B cell (primary cell): ENCODE measurements at regions of chr20 and their contacts with region 1.

Region 1: GRCh38 chr20:10434832-10435812 is at the start of gene SLX4IP:
- DNase-seq: peak; percentile 94
- ATAC-seq: peak; percentile 67
- H3K4me3 ChIP-seq: peak within 1 kb of the TSS; percentile 72 to 93 (median 73)
- H3K4me3 Mint-ChIP-seq: peak within 1 kb of the TSS; percentile 94
- H3K27ac ChIP-seq: peak within 1 kb of the TSS; percentile 81 to 95
- H3K27ac Mint-ChIP-seq: peak within 1 kb of the TSS; percentile 97
- H3K4me1 ChIP-seq: peaks cover 11 to 12% of the 10 kb centered on the region in 2 donors
- H3K4me1 Mint-ChIP-seq: peaks cover 39% of the 10 kb centered on the region
- H3K27me3 ChIP-seq: no peaks in the 10 kb centered on the region
- H3K27me3 Mint-ChIP-seq: no peaks in the 10 kb centered on the region
- CTCF ChIP-seq: no peak
- total RNA-seq, gene SLX4IP: 8.1 and 9.6 TPM in 2 replicates

Region 2: DNA sequence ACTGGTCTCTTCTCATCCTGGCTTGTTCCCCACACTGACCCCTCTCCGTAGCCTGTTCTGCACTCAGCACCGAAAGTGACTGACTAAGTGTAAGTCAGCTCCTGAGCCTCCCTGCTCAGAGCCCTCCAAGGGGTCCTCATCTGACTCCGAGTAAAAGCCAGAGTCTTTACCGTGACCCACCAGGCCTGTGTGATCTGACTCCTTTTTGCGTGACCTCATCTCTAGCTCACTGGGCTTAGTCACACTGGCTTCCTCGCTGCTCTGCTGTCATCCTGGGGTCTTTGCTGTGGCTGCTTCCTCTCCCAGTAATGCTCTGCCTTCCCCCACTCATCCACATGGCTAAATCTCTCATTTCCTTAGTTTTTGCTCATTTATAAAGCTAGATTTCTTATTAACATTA is 1249.6 kb before region 1 on chr20:
- CTCF ChIA-PET with region 1: no interaction called
- POLR2A ChIA-PET with region 1: no interaction called
- intact Hi-C with region 1: no loop called
- DNase-seq: no peak
- ATAC-seq: no peak
- H3K4me3 ChIP-seq: no peak overlapping the region
- H3K4me3 Mint-ChIP-seq: no peak overlapping the region
- H3K27ac ChIP-seq: no peak overlapping the region
- H3K27ac Mint-ChIP-seq: no peak overlapping the region
- H3K4me1 ChIP-seq: no peaks in the 10 kb centered on the region
- H3K4me1 Mint-ChIP-seq: no peaks in the 10 kb centered on the region
- H3K27me3 ChIP-seq: no peaks in the 10 kb centered on the region
- H3K27me3 Mint-ChIP-seq: no peaks in the 10 kb centered on the region
- CTCF ChIP-seq: no peak

Region 3: DNA sequence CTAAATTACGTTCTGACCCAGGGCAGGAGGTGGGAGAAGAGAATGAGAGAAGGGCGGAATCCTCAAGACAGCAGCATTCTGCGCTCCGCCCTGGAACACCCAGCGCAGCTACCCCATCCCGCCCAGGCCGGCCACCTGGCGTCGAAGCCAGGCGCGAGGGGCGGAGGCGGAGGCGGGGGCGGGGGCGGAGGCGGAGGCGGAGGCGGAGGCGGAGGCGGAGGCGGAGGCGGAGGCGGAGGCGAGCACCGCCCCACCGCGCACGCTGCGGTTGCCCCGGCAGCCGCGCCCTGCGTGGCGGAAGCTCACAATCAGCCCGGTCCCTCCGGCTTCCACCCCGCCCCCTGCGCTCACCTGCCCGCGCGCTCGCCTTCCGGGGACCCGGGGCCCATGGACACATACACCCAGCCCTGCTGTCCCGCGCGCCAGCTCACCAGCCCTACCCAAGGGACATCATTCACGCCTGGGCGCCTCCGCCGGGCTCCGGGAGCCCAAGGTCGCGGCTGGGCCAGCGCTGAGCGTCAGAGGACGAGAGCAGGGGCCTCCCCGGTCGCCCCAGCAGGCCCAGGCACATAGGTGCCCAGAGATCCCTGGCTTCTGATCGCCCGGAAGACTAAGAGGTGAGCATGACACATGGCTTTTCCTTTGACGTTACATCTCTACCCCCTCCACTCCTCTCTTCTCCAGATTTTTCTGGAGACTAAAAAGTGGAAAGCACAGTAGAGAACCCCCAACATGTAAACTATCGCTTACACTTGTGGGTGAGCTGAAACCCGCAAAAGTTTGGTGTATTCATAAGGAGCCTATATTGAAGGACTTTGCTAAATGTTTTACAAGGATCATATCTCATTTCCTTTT is 400.2 kb before region 1 on chr20 and contains the start of gene ANKEF1:
- CTCF ChIA-PET with region 1: no interaction called
- POLR2A ChIA-PET with region 1: no interaction called
- intact Hi-C with region 1: loop called (anchors 2 kb)
- DNase-seq: peak; percentile 87
- ATAC-seq: peak; percentile 96
- H3K4me3 ChIP-seq: peak within 1 kb of the TSS in 4 of 5 experiments; percentile 58 to 69 (median 62)
- H3K4me3 Mint-ChIP-seq: peak within 1 kb of the TSS; percentile 77
- H3K27ac ChIP-seq: peak within 1 kb of the TSS in 1 of 2 donors; percentile 47
- H3K27ac Mint-ChIP-seq: peak within 1 kb of the TSS; percentile 60
- H3K4me1 ChIP-seq: peaks cover 12 to 16% of the 10 kb centered on the region in 2 donors
- H3K4me1 Mint-ChIP-seq: peaks cover 13% of the 10 kb centered on the region
- H3K27me3 ChIP-seq: no peaks in the 10 kb centered on the region
- H3K27me3 Mint-ChIP-seq: peaks cover 7% of the 10 kb centered on the region
- CTCF ChIP-seq: no peak
- total RNA-seq, gene ANKEF1: 2.7 and 3.0 TPM in 2 replicates

Region 4: GRCh38 chr20:10352934-10353866 is 81.9 kb before region 1 on chr20:
- CTCF ChIA-PET with region 1: no interaction called
- POLR2A ChIA-PET with region 1: no interaction called
- intact Hi-C with region 1: no loop called
- DNase-seq: no peak
- ATAC-seq: no peak
- H3K4me3 ChIP-seq: no peak overlapping the region
- H3K4me3 Mint-ChIP-seq: no peak overlapping the region
- H3K27ac ChIP-seq: no peak overlapping the region
- H3K27ac Mint-ChIP-seq: no peak overlapping the region
- H3K4me1 ChIP-seq: no peaks in the 10 kb centered on the region
- H3K4me1 Mint-ChIP-seq: no peaks in the 10 kb centered on the region
- H3K27me3 ChIP-seq: no peaks in the 10 kb centered on the region
- H3K27me3 Mint-ChIP-seq: peaks cover 7% of the 10 kb centered on the region
- CTCF ChIP-seq: no peak

Region 5: DNA sequence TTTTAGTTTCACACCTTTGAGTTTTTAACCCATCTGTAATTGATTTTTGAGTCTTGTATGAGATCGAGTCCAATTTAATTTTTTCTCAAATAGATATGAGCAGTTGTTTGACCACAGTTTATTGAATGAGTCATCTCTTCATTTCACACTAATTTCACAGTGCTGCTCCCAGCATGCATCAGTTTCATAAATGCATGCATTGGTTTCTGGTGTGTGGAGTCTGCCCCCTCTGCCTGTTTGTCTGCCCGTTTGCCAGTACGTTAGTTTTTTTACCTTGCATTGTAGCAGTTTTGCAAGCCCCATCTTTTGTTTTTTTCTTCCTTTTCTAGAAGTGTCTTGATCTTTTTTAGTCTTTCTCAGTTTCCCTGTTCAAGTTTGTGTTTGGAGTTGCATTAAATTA is 11.9 kb after region 1 on chr20:
- CTCF ChIA-PET with region 1: no interaction called
- POLR2A ChIA-PET with region 1: no interaction called
- intact Hi-C with region 1: loop called (anchors 1 kb)
- DNase-seq: no peak
- ATAC-seq: peak; percentile 63
- H3K4me3 ChIP-seq: no peak overlapping the region
- H3K4me3 Mint-ChIP-seq: peak overlapping the region; percentile 32
- H3K27ac ChIP-seq: no peak overlapping the region
- H3K27ac Mint-ChIP-seq: no peak overlapping the region
- H3K4me1 ChIP-seq: peaks cover 0 to 5% of the 10 kb centered on the region in 2 donors
- H3K4me1 Mint-ChIP-seq: peaks cover 12% of the 10 kb centered on the region
- H3K27me3 ChIP-seq: no peaks in the 10 kb centered on the region
- H3K27me3 Mint-ChIP-seq: no peaks in the 10 kb centered on the region
- CTCF ChIP-seq: no peak

Region 6: DNA sequence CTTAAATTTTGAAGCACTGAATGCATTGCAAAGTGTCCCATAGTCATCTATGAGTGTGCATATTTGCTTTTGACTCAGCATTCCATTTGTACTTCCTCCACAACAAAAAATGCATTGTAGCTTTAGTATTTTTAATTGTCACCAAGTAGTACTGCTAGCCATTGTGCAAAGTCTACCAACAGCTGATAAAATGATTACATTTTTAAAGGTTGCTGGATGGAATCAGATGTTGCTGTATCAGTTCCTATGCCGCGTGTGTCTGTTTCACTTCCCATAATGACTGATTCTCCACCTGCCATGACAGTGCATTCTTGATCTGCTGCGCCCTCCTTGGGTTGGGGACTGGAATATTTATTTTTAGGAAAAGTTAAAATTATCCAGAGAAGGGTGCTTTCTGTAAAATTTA is 41.2 kb after region 1 on chr20:
- CTCF ChIA-PET with region 1: interaction called, 6 read pairs
- POLR2A ChIA-PET with region 1: no interaction called
- intact Hi-C with region 1: loop called (anchors 2 kb)
- DNase-seq: peak; percentile 58
- ATAC-seq: peak; percentile 69
- H3K4me3 ChIP-seq: no peak overlapping the region
- H3K4me3 Mint-ChIP-seq: no peak overlapping the region
- H3K27ac ChIP-seq: no peak overlapping the region
- H3K27ac Mint-ChIP-seq: no peak overlapping the region
- H3K4me1 ChIP-seq: peaks cover 23 to 24% of the 10 kb centered on the region in 2 donors
- H3K4me1 Mint-ChIP-seq: peaks cover 36% of the 10 kb centered on the region
- H3K27me3 ChIP-seq: no peaks in the 10 kb centered on the region
- H3K27me3 Mint-ChIP-seq: no peaks in the 10 kb centered on the region
- CTCF ChIP-seq: no peak

Region 7: DNA sequence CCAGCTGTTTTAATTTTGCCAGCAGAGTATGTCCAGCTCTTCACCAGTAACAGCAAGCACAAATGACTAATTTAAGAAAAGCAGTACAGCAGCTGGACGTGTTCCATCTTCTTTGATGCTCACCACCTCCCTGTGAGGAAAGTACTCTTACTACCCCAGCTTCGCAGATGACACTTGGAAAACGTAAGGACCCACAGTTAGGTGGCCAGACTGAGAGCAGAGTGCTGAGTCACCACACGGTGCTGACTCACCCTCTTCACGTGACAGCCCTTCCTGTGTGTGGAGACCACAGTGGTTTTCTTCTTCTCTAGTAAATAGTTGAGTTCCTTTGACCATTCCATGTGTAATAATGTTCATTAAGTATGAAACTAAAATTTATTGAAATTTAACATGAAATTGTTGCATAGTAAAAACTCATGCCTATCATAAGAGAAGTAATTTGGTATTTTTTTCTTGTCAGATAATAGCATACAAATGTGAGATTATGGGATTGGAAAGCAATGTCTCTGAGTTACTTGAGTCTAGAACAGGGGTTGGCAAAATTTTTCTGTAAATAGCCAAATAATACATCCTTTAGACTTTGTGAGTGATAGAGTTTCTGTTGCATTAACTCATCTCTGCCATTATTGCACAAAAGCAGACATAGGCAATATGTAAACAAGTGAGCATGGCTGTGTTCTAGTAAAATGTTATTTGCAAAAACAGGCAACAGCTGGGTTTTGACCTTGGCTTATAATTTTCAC is 76.6 kb after region 1 on chr20:
- CTCF ChIA-PET with region 1: no interaction called
- POLR2A ChIA-PET with region 1: no interaction called
- intact Hi-C with region 1: loop called (anchors 2 kb)
- DNase-seq: peak; percentile 17
- ATAC-seq: peak; percentile 69
- H3K4me3 ChIP-seq: no peak overlapping the region
- H3K4me3 Mint-ChIP-seq: no peak overlapping the region
- H3K27ac ChIP-seq: no peak overlapping the region
- H3K27ac Mint-ChIP-seq: peak overlapping the region; percentile 22
- H3K4me1 ChIP-seq: peaks cover 3 to 4% of the 10 kb centered on the region in 2 donors
- H3K4me1 Mint-ChIP-seq: peaks cover 10% of the 10 kb centered on the region
- H3K27me3 ChIP-seq: no peaks in the 10 kb centered on the region
- H3K27me3 Mint-ChIP-seq: no peaks in the 10 kb centered on the region
- CTCF ChIP-seq: no peak